Endothelial cell of umbilical vein (primary cell): ENCODE measurements at regions of chr12 and their contacts with region 1.

Region 1: DNA sequence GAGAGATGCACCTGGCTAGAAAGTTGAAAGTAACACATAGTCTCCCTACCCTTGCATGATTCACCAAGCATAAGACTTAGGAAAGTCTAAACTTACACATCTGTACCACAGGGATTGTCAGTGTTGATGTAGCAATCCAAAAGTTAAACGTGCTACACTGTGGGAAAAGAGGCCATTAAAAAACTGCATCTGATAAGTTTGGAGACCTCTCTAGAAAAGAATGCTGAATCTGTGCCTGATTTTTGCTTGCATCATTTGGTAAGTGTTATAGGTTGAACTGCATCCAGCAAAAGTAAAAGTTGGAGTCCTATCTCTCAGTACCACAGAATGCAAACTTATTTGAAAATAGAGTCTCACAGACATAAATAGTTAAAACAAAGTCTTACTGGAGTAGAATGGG is 126.6 kb downstream of the SLC6A15 start:
- DNase-seq: no peak
- H3K4me3 ChIP-seq: no peak overlapping the region
- H3K27ac ChIP-seq: no peak overlapping the region
- H3K4me1 ChIP-seq: no peaks in the 10 kb centered on the region
- H3K27me3 ChIP-seq: no peaks in the 10 kb centered on the region
- CTCF ChIP-seq: no peak
- POLR2A ChIP-seq: no peak

Region 2: DNA sequence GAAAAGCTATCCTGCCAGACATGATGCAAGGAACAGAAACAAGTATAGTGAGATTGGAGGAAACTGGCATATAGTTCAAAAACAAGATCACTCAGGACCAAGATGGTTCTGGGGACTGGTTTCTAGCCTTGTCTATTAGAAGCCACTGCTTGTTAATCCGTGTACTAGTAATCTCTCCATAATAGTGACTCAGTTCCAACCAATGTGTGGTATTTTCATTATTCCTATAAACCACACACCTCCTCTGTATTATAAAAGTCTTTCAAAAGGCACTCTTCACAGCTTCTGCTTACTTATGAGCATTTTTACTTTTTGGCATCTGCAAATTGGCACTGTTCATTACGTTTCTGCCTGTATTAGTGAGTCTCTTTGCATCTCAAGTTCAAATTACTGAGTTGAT is 13.7 kb before region 1 on chr12:
- CTCF ChIA-PET with region 1: no interaction called
- POLR2A ChIA-PET with region 1: no interaction called
- dilution Hi-C with region 1: no loop called
- intact Hi-C with region 1: no loop called
- DNase-seq: no peak
- H3K4me3 ChIP-seq: no peak overlapping the region
- H3K27ac ChIP-seq: no peak overlapping the region
- H3K4me1 ChIP-seq: no peaks in the 10 kb centered on the region
- H3K27me3 ChIP-seq: no peaks in the 10 kb centered on the region
- CTCF ChIP-seq: no peak
- POLR2A ChIP-seq: no peak

Region 3: GRCh38 chr12:84807249-84807648 is 21.3 kb after region 1 on chr12:
- CTCF ChIA-PET with region 1: no interaction called
- POLR2A ChIA-PET with region 1: no interaction called
- dilution Hi-C with region 1: no loop called
- intact Hi-C with region 1: no loop called
- DNase-seq: no peak
- H3K4me3 ChIP-seq: no peak overlapping the region
- H3K27ac ChIP-seq: no peak overlapping the region
- H3K4me1 ChIP-seq: no peaks in the 10 kb centered on the region
- H3K27me3 ChIP-seq: no peaks in the 10 kb centered on the region
- CTCF ChIP-seq: no peak
- POLR2A ChIP-seq: no peak

Region 4: GRCh38 chr12:86373813-86374212 is 1587.9 kb after region 1 on chr12:
- CTCF ChIA-PET with region 1: no interaction called
- POLR2A ChIA-PET with region 1: no interaction called
- dilution Hi-C with region 1: no loop called
- intact Hi-C with region 1: loop called (anchors 5 kb)
- DNase-seq: no peak
- H3K4me3 ChIP-seq: no peak overlapping the region
- H3K27ac ChIP-seq: no peak overlapping the region
- H3K4me1 ChIP-seq: peaks cover 12% of the 10 kb centered on the region
- H3K27me3 ChIP-seq: no peaks in the 10 kb centered on the region
- CTCF ChIP-seq: no peak
- POLR2A ChIP-seq: no peak